HEK293T (cell line): ENCODE measurements at regions of chr2 and their contacts with region 1.

Region 1: DNA sequence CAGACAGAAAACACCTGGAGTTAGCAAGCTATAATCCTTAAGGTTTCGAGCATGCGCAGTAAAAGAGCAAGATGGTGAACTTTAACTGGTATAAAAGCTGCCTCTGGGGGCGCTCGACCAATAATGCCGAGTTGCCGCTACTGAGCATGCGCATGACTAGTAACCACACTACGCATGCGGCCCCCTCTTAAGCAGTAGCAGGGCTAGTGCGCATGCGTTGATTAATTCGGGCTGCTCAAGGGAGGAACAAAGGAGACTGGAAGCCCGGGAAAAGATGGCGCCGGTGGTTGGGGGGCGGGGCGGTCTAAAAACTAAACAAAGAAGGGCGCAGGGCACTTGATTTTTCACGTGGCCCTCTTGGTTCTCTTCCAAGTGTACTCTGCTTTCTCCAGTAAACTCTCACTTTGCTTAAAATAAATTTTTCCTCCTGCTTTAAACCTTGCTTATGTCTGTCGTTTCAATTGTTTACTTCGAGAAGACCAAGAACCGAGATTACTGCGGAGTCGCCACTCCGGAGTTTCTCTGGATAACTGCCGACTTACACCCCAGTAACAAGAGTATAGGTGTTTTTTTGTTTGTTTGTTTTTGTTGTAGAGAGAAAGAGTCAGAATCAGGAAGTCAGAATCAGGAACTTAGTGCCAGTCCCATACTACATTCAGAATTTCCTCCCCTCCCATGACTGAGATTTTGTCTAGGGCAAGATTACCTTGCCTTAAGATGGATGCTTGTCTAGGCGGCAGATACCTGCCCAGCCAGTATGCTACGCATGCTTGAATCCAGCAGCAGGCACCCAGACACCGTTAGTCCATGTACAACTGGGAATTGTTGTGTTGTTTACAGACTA is 5.8 kb downstream of the XRCC5 start:
- DNase-seq: peak; percentile 98

Region 2: GRCh38 chr2:216074794-216075193 is 40.1 kb before region 1 on chr2:
- CTCF ChIA-PET with region 1: no interaction called
- POLR2A ChIA-PET with region 1: no interaction called
- DNase-seq: no peak

Region 3: GRCh38 chr2:216130346-216130971 is 15.5 kb after region 1 on chr2:
- CTCF ChIA-PET with region 1: no interaction called
- POLR2A ChIA-PET with region 1: no interaction called
- DNase-seq: no peak

Region 4: DNA sequence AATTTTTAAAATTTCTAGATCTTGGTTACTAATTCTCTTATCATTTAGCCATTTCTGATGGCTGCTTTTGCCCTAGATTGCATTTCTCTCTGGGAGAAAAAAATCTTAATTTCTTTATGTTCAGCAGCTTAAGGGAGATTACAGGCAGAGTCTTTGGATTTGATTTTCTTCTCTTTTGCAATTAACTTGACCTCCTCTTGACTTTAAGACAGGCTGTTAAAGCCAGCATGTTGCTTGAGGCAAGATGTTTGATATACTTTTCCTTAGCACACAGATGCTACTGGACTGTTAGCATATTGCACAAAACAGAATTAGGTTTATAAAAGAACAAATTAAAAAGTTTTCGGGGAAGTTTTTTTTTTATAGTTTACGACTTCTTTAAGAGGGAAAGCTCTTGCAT is 44.2 kb after region 1 on chr2:
- CTCF ChIA-PET with region 1: interaction called, 10 read pairs
- POLR2A ChIA-PET with region 1: no interaction called
- DNase-seq: no peak